Left ventricle myocardium inferior (tissue), 1 donor: ENCODE measurements at regions of chr4 and their contacts with region 1.

Region 1: GRCh38 chr4:18593445-18594002 is 572.0 kb upstream of the LCORL start:
- DNase-seq: no peak
- H3K4me3 ChIP-seq: no peak overlapping the region
- H3K27ac ChIP-seq: no peak overlapping the region
- H3K4me1 ChIP-seq: no peaks in the 10 kb centered on the region
- H3K27me3 ChIP-seq: peaks cover 15% of the 10 kb centered on the region
- CTCF ChIP-seq: peak; percentile 87

Region 2: GRCh38 chr4:17552427-17552826 is 1041.1 kb before region 1 on chr4:
- intact Hi-C with region 1: loop called (anchors 10 kb)
- DNase-seq: no peak
- H3K4me3 ChIP-seq: no peak overlapping the region
- H3K27ac ChIP-seq: no peak overlapping the region
- H3K4me1 ChIP-seq: no peaks in the 10 kb centered on the region
- H3K27me3 ChIP-seq: peaks cover 27% of the 10 kb centered on the region
- CTCF ChIP-seq: no peak

Region 3: GRCh38 chr4:17817020-17817419 is 776.5 kb before region 1 on chr4:
- intact Hi-C with region 1: loop called (anchors 5 kb)
- DNase-seq: no peak
- H3K4me3 ChIP-seq: no peak overlapping the region
- H3K27ac ChIP-seq: no peak overlapping the region
- H3K4me1 ChIP-seq: no peaks in the 10 kb centered on the region
- H3K27me3 ChIP-seq: no peaks in the 10 kb centered on the region
- CTCF ChIP-seq: peak; percentile 67